Right ventricle myocardium inferior (tissue), 1 donor: ENCODE measurements at regions of chr10 and their contacts with region 1.

Region 1: GRCh38 chr10:76547352-76547972 is 1090.1 kb downstream of the KCNMA1 start:
- DNase-seq: no peak
- ATAC-seq: peak; percentile 64

Region 2: DNA sequence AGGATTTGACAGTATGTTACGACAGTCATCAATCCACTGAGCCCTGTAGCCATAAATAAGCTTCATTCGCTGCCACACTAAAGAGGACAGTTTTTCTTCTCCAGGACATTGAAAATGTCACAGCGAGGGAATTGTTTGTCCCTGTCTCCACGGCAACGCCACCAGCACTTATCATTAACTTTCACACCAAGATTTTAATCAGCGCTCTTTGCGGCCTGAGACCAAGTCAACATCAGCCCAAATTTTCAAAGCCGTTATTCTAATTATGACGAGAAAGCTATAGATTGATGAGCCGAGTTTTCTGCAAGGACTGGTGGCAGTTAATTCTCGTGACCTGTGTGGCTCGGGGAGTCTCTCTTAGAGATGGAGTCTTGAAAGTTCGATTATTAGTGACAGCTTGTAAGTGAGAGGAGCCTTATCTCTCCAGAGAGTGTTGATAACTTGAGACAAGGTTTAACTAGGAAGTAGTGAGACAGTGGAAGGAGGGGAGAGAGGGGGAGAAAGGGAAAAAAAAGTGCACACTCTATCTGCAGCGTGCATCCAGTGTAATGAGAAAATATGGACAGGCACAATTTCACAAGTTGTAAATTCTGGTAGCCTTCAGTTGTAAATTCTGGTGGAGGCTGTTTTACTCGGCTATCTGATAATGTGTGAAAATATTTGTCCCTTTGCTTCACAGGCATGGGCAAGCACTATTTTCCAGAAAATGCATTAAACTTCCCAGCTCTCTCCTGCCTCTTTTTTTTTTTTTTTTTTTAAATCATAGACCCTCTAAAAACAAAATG is 642.8 kb before region 1 on chr10:
- intact Hi-C with region 1: loop called (anchors 10 kb)
- DNase-seq: no peak
- ATAC-seq: no peak

Region 3: GRCh38 chr10:76036111-76036940 is 511.1 kb before region 1 on chr10:
- intact Hi-C with region 1: loop called (anchors 5 kb)
- DNase-seq: peak; percentile 76
- ATAC-seq: peak; percentile 90

Region 4: DNA sequence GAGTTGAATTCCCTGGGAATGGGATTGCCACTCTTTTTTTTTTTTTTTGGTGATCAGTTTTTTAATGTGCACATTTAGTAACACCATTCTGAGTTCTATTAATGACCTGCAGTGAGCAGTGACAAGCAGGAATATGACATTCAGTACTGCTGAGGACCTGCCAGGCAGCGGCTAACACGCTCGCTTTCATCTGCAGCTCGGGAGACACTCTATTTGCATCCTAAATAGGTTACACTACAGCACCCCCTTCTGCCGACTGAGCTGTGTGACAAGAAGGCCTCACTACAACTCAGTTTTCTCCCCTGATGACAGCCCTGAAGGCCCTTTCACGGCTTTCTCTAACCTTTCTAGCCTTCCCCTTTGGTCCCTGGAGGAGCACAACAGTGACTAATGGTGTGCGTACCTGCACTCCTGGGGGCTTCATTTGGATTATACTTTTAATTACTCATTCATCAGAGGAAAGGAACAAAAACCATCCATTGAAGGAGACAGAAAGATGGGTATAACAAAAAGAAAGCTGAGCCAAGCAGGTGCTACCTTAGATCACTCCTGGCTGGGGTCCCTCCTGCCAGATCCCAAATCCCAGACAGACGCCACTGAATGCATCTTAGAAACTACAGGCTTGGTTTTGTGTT is 243.7 kb before region 1 on chr10:
- intact Hi-C with region 1: loop called (anchors 5 kb)
- DNase-seq: peak; percentile 77
- ATAC-seq: peak; percentile 96

Region 5: DNA sequence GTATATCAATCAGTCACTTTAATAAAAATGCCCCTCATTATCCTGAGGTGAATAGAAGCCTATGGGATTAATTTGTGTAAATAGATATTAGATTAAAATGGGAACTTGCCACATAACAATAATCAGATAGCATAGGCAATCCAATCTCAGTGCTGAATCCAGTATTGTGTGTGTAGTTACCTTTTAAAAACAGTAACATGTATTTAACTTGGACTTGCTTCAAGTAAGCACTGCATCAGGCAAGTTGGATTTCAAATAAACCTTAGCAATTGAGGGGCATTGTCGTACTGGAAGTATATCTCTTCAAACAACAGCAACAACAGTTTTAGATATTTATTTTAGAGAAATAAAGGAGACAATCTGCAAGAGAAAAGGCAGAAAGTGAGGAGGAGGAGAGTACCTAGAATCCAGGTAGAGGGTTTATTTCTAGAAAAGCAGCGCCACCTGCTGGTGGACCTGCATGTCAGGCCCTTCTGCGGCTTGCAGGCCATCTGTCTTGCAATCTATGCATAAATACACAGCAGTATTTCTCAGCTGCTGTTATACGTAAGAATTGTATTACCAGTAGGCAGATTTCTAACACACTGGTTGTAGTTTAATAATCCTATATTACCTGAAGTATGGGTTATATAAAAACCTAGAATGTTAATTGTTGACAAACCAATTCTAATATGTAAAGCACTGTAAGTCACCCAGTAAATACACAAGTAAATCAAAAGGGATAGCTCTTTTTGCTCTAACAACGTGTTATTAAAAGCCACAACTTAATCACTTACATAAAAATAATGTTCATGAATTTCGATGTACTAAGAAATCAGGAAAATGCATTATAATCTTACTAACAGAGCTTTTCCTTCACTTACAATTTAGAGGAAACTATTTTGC is 437.3 kb after region 1 on chr10:
- intact Hi-C with region 1: loop called (anchors 5 kb)
- DNase-seq: peak; percentile 74
- ATAC-seq: peak; percentile 70